ENCODE measurements at regions of chr22 and their contacts with region 1.

Region 1: DNA sequence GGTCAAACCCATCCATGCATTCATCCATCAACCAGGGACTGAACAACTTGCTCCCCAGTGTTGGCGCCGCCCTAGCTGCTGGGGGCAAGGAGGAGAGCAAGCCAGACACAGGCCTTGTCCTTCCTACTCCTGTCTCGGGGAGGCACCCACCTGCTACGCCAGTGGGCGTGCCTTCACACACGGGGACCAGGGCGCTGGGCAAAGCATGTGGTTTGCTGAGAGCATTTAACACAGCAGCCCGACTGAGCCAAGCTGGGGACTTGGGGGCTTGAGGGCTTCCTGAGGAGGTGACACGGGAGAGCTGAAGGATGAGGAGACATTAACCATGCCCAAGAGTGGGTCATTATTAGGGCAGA is 30.6 kb downstream of the CACNA1I start:
- DNase-seq: no peak
- H3K4me3 ChIP-seq: no peak overlapping the region
- H3K27ac ChIP-seq: no peak overlapping the region
- H3K4me1 ChIP-seq: peaks cover 4% of the 10 kb centered on the region
- H3K27me3 ChIP-seq: no peaks in the 10 kb centered on the region
- CTCF ChIP-seq: no peak

Region 2: GRCh38 chr22:39554151-39554550 is 47.0 kb before region 1 on chr22:
- CTCF ChIA-PET with region 1: no interaction called
- dilution Hi-C with region 1: loop called (anchors 5 kb)
- in situ Hi-C with region 1: no loop called
- intact Hi-C with region 1: no loop called
- DNase-seq: no peak
- H3K4me3 ChIP-seq: no peak overlapping the region
- H3K27ac ChIP-seq: no peak overlapping the region
- H3K4me1 ChIP-seq: peaks cover 2% of the 10 kb centered on the region
- H3K27me3 ChIP-seq: peaks cover 15% of the 10 kb centered on the region
- CTCF ChIP-seq: no peak

Region 3: DNA sequence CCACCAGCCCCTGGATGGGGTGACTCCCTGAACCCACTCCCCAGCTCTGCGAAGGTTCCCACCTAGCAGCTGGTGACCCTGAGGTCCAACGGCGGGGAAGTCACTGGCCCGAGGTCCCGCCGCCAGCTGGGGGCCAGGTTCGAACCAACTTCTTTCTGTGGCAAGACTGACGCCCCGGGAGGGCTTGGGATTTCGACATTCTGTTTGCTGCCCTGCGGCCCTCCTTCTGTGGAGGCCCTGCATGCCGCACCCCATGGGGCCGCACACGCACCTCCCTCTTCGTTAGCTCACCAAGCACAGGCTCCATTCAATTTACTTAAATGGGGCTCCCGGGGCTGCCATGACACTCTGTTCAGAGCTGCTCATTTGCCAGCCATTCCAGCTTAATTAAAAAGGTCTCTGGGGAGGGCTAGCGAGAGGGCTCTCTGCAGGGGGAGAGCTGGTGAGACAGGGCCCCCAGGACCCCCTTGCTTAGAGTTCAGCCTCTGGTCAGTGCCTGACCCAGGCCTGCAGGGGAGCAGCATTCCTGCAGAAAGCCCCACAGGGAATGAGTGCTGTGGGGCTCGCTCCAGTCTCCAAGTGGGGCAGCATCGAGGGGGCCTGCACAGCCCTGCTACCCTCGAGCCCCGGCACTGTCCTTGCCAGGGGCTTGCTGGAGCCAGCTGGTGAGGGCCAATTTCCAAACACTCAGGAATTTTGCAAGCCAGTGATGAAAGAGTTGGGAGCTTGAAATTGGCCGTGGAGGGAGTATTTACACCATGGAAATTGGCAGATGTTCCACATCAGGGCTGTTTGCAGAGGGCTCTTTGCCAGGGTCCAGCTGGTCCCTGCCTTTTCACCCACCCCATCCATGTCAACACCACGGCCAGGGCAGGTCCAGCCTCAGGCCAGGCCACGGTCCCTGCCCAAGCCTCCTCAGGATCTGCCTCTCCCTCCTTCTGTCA is 50.2 kb after region 1 on chr22:
- CTCF ChIA-PET with region 1: no interaction called
- dilution Hi-C with region 1: no loop called
- in situ Hi-C with region 1: no loop called
- intact Hi-C with region 1: no loop called
- DNase-seq: no peak
- H3K4me3 ChIP-seq: no peak overlapping the region
- H3K27ac ChIP-seq: no peak overlapping the region
- H3K4me1 ChIP-seq: no peaks in the 10 kb centered on the region
- H3K27me3 ChIP-seq: no peaks in the 10 kb centered on the region
- CTCF ChIP-seq: no peak

Region 4: DNA sequence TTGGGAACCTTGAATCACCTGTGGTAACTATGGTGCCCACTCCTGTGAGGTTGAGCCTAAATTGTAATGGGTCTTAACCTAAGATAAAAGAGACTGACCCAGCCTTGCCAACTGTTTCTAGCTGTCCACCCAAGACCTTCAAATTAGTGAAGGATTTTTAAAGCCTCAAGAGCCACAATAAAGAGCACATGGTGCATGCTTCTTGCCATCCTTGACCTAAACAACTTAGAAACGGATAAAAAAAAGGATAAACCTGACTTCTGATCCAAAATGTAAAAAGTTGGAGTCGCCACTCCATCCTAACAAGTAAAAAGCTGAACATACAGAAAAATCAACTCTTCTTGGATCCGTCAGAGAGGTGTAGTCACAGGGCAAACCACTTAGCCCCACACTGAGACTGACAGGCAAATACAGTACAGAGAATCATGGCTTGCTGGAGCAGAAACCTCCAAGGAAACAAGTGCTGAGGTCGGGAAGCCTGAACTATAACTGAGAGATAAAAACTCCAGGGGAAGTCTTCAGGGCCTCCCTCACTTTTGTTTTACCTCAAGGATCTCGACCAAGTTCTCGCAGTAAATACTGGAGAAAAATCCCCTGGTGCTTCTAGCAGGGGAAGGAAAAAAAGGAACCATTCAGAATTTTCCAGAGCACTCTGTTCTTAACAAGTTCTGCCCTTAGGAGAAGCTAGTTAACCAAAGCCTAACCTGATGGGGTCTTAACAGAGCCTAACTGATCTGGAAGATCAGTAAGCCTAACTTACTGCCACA is 276.1 kb after region 1 on chr22:
- CTCF ChIA-PET with region 1: no interaction called
- dilution Hi-C with region 1: no loop called
- in situ Hi-C with region 1: no loop called
- intact Hi-C with region 1: no loop called
- DNase-seq: no peak
- H3K4me3 ChIP-seq: no peak overlapping the region
- H3K27ac ChIP-seq: no peak overlapping the region
- H3K4me1 ChIP-seq: no peaks in the 10 kb centered on the region
- H3K27me3 ChIP-seq: peaks cover 4% of the 10 kb centered on the region
- CTCF ChIP-seq: no peak

Region 5: DNA sequence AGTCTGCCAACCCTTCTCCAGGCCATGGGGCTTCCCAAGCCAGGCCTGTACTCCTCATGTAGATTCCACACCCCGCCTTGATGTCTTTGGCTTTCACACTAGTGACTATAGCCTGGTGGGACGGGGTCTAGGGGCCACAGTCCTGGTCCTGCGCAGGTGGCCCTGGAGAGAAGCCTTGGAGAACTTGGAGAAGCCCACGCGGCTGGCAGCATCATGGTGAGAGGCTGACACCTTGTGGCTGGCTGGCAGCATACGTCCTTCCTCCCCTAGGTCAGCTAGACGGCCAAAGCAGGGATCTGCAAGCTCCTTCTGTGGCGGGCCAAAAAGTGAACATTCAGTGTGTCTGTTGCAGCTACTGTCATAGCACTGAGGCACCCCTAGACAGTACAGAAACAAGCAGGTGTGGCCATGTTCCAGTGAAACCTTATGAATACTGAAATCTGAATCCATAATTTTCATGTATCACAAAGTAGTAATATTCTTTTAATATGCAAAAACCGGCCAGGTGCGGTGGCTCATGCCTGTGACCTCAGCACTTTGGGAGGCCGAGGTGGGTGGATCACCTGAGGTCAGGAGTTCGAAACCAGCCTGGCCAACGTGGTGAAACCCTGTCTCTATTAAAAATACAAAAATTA is 435.6 kb after region 1 on chr22:
- CTCF ChIA-PET with region 1: no interaction called
- dilution Hi-C with region 1: no loop called
- in situ Hi-C with region 1: no loop called
- intact Hi-C with region 1: no loop called
- DNase-seq: no peak
- H3K4me3 ChIP-seq: no peak overlapping the region
- H3K27ac ChIP-seq: no peak overlapping the region
- H3K4me1 ChIP-seq: peaks cover 23% of the 10 kb centered on the region
- H3K27me3 ChIP-seq: no peaks in the 10 kb centered on the region
- CTCF ChIP-seq: peak; percentile 47 to 65

Measured in mammary epithelial cell (primary cell).